ENCODE measurements at regions of chr18 and their contacts with region 1.

Region 1: DNA sequence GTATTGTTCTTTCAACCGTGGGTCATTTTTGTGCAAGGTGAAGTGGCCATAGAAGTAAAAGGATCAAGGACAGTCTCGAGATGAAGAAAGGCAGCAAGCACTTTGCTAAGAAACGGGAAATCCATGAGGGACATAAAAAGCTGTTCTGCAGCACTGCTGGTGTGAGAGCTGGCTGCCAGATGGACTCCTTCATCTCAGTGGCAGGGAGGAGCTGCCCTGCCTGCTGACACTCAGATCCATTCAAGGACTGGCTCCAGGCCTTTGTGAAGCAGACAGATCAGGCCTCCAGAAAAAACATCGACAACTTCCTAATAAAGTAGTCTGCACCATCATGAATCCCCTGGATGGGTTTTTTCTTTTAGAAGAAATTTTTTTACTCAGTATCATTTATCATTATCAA is 29.5 kb downstream of the RMC1 start:
- DNase-seq: no peak
- ATAC-seq: no peak
- H3K4me3 ChIP-seq: no peak overlapping the region
- H3K27ac ChIP-seq: no peak overlapping the region
- H3K4me1 ChIP-seq: no peaks in the 10 kb centered on the region
- H3K27me3 ChIP-seq: no peaks in the 10 kb centered on the region
- CTCF ChIP-seq: no peak

Region 2: DNA sequence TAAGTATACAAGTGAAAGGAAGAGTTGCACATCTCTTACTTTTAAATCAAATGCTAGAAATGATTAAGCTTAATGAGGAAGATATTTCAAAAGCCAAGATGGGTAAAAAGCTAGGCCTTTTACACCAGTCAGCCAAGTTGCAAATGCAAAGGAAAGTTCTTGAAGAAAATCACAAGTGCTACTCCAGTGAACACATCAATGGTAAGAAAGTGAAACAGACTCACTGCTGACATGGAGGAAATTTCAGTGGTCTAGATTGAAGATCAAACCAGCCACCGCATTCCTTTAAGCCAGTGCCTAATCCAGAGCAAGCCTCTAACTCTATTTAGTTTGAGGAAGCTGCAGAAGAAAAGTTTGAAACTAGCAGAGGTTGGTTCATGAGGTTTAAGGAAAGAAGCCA is 520.6 kb before region 1 on chr18:
- intact Hi-C with region 1: no loop called
- DNase-seq: no peak
- ATAC-seq: no peak
- H3K4me3 ChIP-seq: no peak overlapping the region
- H3K27ac ChIP-seq: no peak overlapping the region
- H3K4me1 ChIP-seq: no peaks in the 10 kb centered on the region
- H3K27me3 ChIP-seq: no peaks in the 10 kb centered on the region
- CTCF ChIP-seq: no peak

Region 3: GRCh38 chr18:23460285-23461273 is 72.3 kb before region 1 on chr18:
- intact Hi-C with region 1: loop called in 1 of 3 experiments (anchors 10 kb)
- DNase-seq: no peak
- ATAC-seq: peak; percentile 27 to 65 (median 32)
- H3K4me3 ChIP-seq: no peak overlapping the region
- H3K27ac ChIP-seq: no peak overlapping the region
- H3K4me1 ChIP-seq: peaks cover 6 to 48% (median 25%) of the 10 kb centered on the region in 3 donors
- H3K27me3 ChIP-seq: no peaks in the 10 kb centered on the region
- CTCF ChIP-seq: no peak

Measured in pancreas (tissue), 10 donors.